HepG2 (cell line): ENCODE measurements at regions of chr14 and their contacts with region 1.

Region 1: DNA sequence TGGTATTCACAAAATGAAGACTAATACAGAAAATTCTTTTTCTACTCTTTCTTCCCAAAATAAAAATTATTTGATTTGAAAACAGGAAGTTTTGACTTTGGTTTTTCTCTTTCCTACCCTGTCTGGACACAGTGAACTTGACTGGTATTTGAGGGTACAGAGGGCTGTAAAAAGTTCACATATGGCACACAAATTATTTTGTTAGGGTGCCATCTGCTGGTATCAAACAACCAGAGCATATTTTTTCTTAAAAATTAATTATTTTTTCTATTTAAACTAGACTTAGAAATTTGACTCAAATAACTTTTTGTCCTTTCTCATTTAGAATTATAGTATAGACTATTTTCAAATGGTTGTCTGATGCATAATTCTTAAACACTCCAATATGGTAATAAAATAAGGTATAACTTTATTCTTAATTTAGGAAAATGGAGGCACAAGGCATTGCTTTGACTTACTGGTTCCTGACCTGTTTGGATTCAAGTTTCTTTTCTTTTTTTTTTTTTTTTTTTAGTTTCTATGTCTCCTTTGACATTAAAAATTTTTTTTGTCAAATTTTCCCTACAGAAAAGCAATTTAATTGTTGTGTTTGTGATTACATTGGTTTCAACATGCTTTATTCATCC is 390.6 kb downstream of the PRKD1 start:
- DNase-seq: peak; percentile 25
- ATAC-seq: peak; percentile 27; the same call in 1 of the 3 replicates
- H3K4me3 ChIP-seq: no peak overlapping the region
- H3K27ac ChIP-seq: no peak overlapping the region
- H3K4me1 ChIP-seq: no peaks in the 10 kb centered on the region
- H3K27me3 ChIP-seq: no peaks in the 10 kb centered on the region
- CTCF ChIP-seq: peak; percentile 31; the same call in 1 of the 2 replicates
- EP300 ChIP-seq: no peak
- POLR2A ChIP-seq: no peak
- RAD21 ChIP-seq: no peak

Region 2: DNA sequence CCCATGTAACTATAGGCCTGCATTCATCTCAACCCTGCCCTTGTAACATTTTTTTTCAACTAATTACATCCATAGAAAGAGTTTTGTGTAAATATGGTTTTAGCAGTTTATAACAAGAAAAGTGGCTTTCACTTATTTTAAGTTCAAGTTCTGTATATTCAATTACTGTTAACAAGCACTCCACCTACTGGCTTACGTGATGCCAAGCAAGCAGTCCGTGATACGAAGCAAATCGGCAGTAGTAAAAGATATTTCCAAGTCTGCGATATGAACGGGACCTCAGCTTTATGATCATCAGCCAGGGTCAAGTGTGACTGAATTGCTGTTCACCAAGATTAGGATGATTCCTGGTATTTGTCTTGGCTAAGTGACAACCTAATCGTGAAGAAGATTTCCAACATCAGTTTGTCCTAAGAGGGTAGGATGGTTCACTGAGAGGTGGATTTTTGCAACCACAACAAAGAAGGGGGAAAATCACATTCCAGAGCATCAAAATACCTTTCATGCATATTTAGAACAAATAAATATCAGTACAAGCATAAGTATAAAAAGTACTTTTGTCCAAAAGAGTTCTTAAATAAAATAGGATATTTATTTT is 314.2 kb before region 1 on chr14:
- CTCF ChIA-PET with region 1: no interaction called
- POLR2A ChIA-PET with region 1: no interaction called
- in situ Hi-C with region 1: no loop called
- intact Hi-C with region 1: loop called (anchors 10 kb)
- DNase-seq: peak; percentile 63
- ATAC-seq: peak; percentile 91
- H3K4me3 ChIP-seq: no peak overlapping the region
- H3K27ac ChIP-seq: no peak overlapping the region
- H3K4me1 ChIP-seq: no peaks in the 10 kb centered on the region
- H3K27me3 ChIP-seq: no peaks in the 10 kb centered on the region
- CTCF ChIP-seq: peak; percentile 82
- EP300 ChIP-seq: no peak
- POLR2A ChIP-seq: no peak
- RAD21 ChIP-seq: no peak